Activated B cell treated with CpG ODN at 0.5 μM for 24 hours (primary cell): ENCODE measurements at regions of chr2 and their contacts with region 1.

Region 1: DNA sequence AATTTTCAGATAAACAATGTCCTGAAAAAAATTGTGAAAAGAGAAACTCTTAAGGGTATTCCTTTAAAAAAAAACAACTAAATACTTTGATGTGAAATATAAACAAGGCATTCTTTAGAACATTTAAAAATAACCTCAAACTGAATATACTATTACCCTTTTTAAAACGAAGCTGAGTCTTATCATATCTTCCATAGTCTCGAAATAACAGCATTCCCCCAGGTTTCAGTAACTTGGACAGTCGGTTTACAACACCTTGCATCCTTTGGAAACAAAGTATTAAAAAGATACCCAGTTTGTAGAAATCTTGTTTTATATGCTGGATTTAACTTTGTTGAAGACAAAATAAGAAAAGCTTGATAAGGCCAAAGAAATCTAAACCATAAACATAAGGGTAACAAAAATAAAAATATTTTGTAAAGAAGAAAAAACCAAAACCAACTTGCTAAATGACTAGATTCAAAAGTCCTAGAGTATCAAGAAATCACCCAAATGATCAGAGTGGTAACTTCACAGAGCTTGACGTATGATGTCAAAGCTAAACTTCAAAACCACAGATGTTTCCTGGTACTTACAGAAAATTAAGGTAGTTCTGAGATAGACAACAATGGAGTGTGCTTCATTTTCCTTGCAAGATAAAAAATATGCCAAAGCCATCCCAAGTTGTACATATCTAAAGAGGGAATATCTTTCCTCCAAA is 107.8 kb downstream of the METTL8 start:
- DNase-seq: no peak
- ATAC-seq: peak; percentile 64
- H3K4me3 Mint-ChIP-seq: peak overlapping the region; percentile 82
- H3K27ac Mint-ChIP-seq: peak overlapping the region; percentile 92
- H3K4me1 Mint-ChIP-seq: peaks cover 87% of the 10 kb centered on the region
- H3K27me3 Mint-ChIP-seq: no peaks in the 10 kb centered on the region
- CTCF ChIP-seq: no peak

Region 2: DNA sequence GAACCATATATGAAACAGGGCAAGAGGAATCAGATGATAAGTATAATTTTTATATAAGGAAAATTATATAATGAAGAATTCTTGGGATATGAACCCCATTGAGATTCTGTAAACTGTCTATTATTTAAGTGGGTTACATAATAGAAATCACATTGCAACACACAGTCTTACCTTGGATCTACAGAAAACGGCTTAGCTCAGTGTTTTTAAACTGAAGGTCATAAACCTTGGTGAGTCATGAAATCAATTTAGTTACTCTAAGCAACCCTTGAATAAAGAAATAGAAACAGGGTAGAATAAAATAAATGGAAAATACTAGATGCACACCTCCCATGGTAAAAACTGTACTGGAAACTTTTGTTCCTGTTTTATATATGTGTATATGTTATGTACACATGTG is 57.1 kb after region 1 on chr2:
- CTCF ChIA-PET with region 1: no interaction called
- POLR2A ChIA-PET with region 1: interaction called, 11 read pairs
- intact Hi-C with region 1: no loop called
- DNase-seq: no peak
- ATAC-seq: no peak
- H3K4me3 Mint-ChIP-seq: no peak overlapping the region
- H3K27ac Mint-ChIP-seq: no peak overlapping the region
- H3K4me1 Mint-ChIP-seq: peaks cover 42% of the 10 kb centered on the region
- H3K27me3 Mint-ChIP-seq: no peaks in the 10 kb centered on the region
- CTCF ChIP-seq: no peak

Region 3: DNA sequence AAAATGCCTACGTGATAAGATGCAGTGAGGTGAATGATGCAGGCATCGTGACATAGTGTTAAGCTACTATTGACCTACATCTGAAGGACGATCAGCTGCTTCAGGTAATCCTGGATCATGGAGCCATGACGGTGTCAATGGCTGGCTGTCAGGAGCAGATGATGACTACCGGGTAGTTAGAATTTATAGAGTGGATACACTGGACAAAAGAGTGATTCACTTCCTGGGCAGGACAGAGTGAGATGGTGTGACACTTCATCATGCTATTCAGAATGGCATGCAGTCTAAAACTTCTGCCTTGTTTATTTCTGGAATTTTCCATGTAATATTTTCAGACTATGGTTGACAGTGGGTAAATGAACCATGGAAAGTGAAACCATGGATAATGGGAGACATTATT is 78.2 kb after region 1 on chr2:
- CTCF ChIA-PET with region 1: interaction called, 3 read pairs
- POLR2A ChIA-PET with region 1: interaction called, 13 read pairs
- intact Hi-C with region 1: no loop called
- DNase-seq: no peak
- ATAC-seq: no peak
- H3K4me3 Mint-ChIP-seq: no peak overlapping the region
- H3K27ac Mint-ChIP-seq: no peak overlapping the region
- H3K4me1 Mint-ChIP-seq: peaks cover 44% of the 10 kb centered on the region
- H3K27me3 Mint-ChIP-seq: no peaks in the 10 kb centered on the region
- CTCF ChIP-seq: no peak

Region 4: GRCh38 chr2:171409436-171409971 is 83.5 kb after region 1 on chr2:
- CTCF ChIA-PET with region 1: interaction called, 3 read pairs
- POLR2A ChIA-PET with region 1: interaction called, 34 read pairs
- intact Hi-C with region 1: no loop called
- DNase-seq: no peak
- ATAC-seq: no peak
- H3K4me3 Mint-ChIP-seq: peak overlapping the region; percentile 73
- H3K27ac Mint-ChIP-seq: peak overlapping the region; percentile 76
- H3K4me1 Mint-ChIP-seq: peaks cover 40% of the 10 kb centered on the region
- H3K27me3 Mint-ChIP-seq: no peaks in the 10 kb centered on the region
- CTCF ChIP-seq: no peak

Region 5: DNA sequence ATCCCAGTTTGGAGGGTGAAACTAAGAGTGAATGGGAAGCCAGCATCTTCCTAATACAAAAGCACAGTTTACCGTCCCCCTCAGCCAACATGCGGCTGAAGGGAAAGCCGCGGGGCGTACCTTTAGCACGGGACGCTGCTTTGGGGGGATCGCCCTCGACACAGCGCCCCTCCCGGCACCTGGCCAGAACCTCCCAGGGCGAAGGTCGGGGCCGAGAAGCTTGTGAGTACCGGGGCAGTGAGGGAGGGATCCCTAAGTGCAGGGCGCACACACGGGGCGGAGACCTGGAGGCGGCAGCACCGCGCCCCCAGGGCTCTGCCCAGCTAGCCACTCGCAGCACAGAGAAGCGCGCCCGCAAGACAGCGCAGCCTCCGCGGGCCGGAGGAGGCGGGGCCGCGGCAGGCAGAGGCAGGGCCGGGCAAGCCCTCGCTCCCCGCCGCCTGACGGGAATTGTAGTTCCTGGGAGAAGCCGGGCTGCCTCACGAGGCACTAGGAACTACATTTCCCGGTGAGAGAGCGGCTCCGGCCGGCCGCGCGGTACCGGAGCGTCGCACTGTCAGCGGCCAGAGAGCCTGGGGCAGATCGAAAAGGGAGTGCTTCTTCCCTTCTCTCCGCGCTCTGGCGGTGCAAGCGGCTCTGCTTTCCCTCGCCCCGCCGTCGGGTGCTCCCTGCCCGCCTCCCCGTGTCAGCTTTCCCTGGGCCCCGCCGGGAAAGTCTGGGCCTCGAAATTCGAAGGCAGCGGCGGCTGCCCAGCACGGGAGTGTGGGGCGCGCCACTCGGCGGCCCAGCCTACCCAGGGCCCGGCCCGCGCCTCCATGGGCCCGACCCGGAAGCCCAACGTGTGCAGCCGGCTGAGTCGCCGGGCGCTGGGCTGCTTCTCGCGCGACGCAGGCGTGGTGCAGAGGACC is 108.0 kb after region 1 on chr2 and contains the starts of genes DCAF17 and METTL8:
- CTCF ChIA-PET with region 1: interaction called, 3 read pairs
- POLR2A ChIA-PET with region 1: interaction called, 21 read pairs
- intact Hi-C with region 1: no loop called
- DNase-seq: peak; percentile 91
- ATAC-seq: peak; percentile 92
- H3K4me3 Mint-ChIP-seq: peak within 1 kb of the TSS; percentile 90
- H3K27ac Mint-ChIP-seq: peak within 1 kb of the TSS; percentile 94
- H3K4me1 Mint-ChIP-seq: peaks cover 24% of the 10 kb centered on the region
- H3K27me3 Mint-ChIP-seq: no peaks in the 10 kb centered on the region
- CTCF ChIP-seq: no peak
- total RNA-seq, gene DCAF17: 23.1 and 23.5 TPM in 2 replicates
- total RNA-seq, gene METTL8: 16.5 and 22.9 TPM in 2 replicates

Region 6: GRCh38 chr2:171479154-171479814 is 153.2 kb after region 1 on chr2:
- CTCF ChIA-PET with region 1: no interaction called
- POLR2A ChIA-PET with region 1: no interaction called
- intact Hi-C with region 1: no loop called
- DNase-seq: no peak
- ATAC-seq: no peak
- H3K4me3 Mint-ChIP-seq: no peak overlapping the region
- H3K27ac Mint-ChIP-seq: no peak overlapping the region
- H3K4me1 Mint-ChIP-seq: no peaks in the 10 kb centered on the region
- H3K27me3 Mint-ChIP-seq: no peaks in the 10 kb centered on the region
- CTCF ChIP-seq: no peak